Activated naive CD4-positive, alpha-beta T cell treated with anti-CD3 and anti-CD28 coated beads for 36 hours (primary cell): ENCODE measurements at regions of chr11 and their contacts with region 1.

Region 1: DNA sequence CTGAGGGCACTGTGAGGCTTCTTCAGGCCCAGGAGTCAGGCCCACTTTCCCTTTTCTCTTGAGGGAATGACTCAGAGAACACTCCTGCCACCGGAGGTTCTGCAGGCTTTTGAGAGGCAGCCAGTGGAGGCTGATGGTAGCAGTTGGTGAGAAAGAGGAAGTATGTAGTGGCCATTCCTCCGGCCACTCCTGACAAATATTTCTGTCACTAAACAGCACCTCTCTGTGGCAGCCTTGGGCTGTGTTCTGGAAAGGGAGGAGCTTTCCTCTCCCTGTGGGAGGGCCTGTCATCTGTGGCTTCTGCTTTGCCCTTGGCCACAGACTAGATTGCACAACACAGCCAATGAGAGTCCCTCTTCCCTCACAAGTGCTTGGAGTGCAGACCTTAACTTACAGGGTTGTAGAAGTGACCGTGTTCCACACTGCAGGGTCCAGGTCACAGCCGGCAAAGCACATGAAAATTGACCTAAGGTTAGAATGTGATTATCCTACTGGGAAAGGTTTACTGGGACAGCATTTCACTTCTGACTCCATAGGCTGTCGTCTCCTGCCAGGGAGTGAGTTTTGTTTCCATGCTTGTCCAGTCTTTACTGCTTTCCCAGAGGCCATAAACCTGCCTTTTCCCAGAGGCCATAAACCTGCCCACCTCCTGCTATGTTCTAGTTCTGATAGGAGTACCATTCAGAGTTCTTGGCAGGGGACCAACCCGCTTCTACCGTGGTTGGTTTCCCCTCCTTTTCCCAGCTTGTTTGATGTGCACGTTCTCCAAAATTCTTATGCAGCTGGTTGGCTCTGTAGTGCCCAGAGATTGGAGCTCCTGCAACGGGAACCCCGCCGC is 33.3 kb downstream of the MARK2 start:
- DNase-seq: peak; percentile 61
- H3K4me3 Mint-ChIP-seq: no peak overlapping the region
- H3K27ac Mint-ChIP-seq: no peak overlapping the region
- H3K4me1 Mint-ChIP-seq: peaks cover 78% of the 10 kb centered on the region
- H3K27me3 Mint-ChIP-seq: no peaks in the 10 kb centered on the region

Region 2: DNA sequence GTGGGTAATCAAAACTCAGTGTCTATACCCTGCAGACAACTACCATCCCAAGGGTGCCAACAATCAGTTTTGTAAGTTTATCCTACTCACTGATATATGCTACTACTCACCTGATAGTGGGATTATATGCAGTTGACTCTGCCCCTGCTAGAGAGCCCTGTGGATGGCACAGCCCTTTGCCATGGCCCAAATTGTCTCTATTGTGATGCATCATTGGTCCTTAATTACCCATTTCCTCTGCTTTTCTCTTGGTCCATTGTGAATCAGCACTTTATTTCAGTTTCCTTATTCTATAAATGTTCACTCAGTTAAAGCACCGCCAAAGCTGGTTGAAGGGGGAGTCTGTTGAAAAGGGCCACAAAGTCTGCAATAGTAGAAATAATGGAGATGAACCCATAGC is 423.5 kb before region 1 on chr11:
- CTCF ChIA-PET with region 1: no interaction called
- intact Hi-C with region 1: no loop called
- DNase-seq: no peak
- H3K4me3 Mint-ChIP-seq: no peak overlapping the region
- H3K27ac Mint-ChIP-seq: no peak overlapping the region
- H3K4me1 Mint-ChIP-seq: peaks cover 17% of the 10 kb centered on the region
- H3K27me3 Mint-ChIP-seq: no peaks in the 10 kb centered on the region

Region 3: DNA sequence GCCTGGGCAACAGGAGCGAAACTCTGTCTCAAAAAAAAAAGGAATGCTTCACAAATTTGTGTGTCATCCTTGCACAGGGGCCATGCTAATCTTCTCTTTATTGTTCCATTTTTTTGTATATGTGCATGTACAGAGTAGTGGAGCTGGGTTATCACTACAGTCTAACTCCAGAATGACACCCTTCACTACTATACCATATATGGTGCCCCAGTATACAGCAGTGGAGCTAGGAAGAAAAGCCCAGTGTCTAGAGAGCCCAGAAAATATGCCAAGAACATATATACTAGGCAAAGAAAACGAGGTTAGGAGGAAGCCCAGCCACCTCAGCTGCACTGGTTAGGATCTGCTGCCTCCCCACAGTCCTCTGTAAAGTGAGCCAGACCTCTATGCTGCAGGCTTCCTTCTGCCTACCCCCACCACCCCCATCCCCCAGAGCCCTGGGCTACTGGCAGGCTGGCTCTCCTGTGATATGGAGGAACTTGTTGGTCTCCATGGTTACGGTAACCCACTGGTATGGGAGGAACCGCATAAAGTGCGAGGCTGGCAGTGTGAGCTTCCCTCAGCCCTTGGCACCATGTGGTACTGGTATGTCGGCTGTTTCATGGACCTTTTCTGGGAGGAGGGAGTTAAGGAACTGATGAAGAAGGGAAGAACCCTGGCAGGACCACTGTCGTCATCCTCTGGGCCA is 10.5 kb after region 1 on chr11:
- CTCF ChIA-PET with region 1: interaction called, 8 read pairs
- intact Hi-C with region 1: loop called (anchors 1 kb)
- DNase-seq: no peak
- H3K4me3 Mint-ChIP-seq: no peak overlapping the region
- H3K27ac Mint-ChIP-seq: no peak overlapping the region
- H3K4me1 Mint-ChIP-seq: peaks cover 82% of the 10 kb centered on the region
- H3K27me3 Mint-ChIP-seq: no peaks in the 10 kb centered on the region